ENCODE measurements at regions of chr1 and their contacts with region 1.

Region 1: DNA sequence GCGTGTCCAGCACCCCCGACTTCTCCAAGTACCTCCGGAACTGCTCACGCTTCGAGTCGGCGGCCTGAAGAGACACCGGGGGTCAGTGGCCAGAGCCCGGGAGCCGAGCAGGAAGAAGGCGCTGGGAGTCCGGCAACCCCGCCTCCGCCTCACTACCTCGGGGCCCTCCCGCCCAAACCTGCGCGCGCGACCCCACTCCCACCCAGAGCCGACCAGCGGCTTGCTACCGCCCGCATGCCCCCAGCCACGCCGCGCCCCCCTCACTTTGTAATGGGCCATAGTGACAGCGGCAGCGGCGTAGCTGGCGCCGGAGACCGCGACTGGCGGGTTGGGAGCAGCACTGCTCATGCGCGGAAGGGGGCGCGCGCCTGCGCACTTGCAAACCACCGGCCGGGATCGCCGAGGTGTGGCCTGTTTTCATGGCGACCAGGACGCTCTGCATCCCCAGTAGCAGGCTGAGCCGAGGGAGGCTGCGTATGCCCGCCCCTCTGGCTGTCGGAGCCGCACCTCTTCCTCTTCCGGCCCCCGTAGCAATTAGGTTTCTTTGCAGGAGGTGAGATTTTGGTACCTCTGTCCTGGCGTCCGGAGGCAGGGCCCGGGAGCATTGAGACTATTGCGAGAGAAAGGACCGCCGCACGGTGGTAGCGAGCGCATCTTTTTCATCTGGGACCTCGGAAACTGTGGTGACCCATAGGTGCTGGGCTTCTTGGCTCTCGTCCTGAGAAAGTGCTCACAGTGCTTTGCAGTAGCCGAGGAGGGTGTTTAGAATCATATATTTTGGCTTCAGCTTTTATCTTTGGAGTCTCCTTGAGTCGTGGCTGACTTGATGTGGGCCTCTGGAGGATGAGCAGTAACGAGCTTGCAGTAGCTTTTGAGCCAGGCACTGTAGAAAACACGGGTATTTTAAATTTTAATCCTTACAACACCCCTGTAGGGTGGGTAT is at the start of gene MYCBP:
- DNase-seq: peak; percentile 94
- ATAC-seq: peak; percentile 99
- H3K4me3 ChIP-seq: peak within 1 kb of the TSS; percentile 87
- H3K27ac ChIP-seq: peak within 1 kb of the TSS; percentile 59
- H3K4me1 ChIP-seq: no peaks in the 10 kb centered on the region; the same call in 1 of the 2 replicates
- H3K27me3 ChIP-seq: no peaks in the 10 kb centered on the region
- CTCF ChIP-seq: no peak
- POLR2A ChIP-seq: no peak
- RAD21 ChIP-seq: no peak
- total RNA-seq, gene MYCBP: 9.9 and 15.6 TPM in 2 replicates

Region 2: GRCh38 chr1:38990738-38991639 is 117.7 kb after region 1 on chr1 and contains the start of gene AKIRIN1:
- CTCF ChIA-PET with region 1: no interaction called
- POLR2A ChIA-PET with region 1: interaction called, 5 read pairs
- dilution Hi-C with region 1: no loop called
- in situ Hi-C with region 1: no loop called
- intact Hi-C with region 1: loop called (anchors 2 kb)
- DNase-seq: peak; percentile 95
- ATAC-seq: peak; percentile 94
- H3K4me3 ChIP-seq: peak within 1 kb of the TSS; percentile 85
- H3K27ac ChIP-seq: peak within 1 kb of the TSS; percentile 93
- H3K4me1 ChIP-seq: peaks cover 11% of the 10 kb centered on the region
- H3K27me3 ChIP-seq: no peaks in the 10 kb centered on the region
- CTCF ChIP-seq: no peak
- POLR2A ChIP-seq: peak; percentile 98
- RAD21 ChIP-seq: no peak
- total RNA-seq, gene AKIRIN1: 42.5 and 63.9 TPM in 2 replicates

Region 3: GRCh38 chr1:39026051-39026865 is 153.0 kb after region 1 on chr1 and contains the start of gene NDUFS5:
- CTCF ChIA-PET with region 1: no interaction called
- POLR2A ChIA-PET with region 1: no interaction called
- dilution Hi-C with region 1: no loop called
- in situ Hi-C with region 1: no loop called
- intact Hi-C with region 1: loop called (anchors 1 kb)
- DNase-seq: peak; percentile 95
- ATAC-seq: peak; percentile 93
- H3K4me3 ChIP-seq: peak within 1 kb of the TSS; percentile 75
- H3K27ac ChIP-seq: peak within 1 kb of the TSS; percentile 93
- H3K4me1 ChIP-seq: peaks cover 3% of the 10 kb centered on the region
- H3K27me3 ChIP-seq: no peaks in the 10 kb centered on the region
- CTCF ChIP-seq: no peak
- POLR2A ChIP-seq: peak; percentile 98
- RAD21 ChIP-seq: 0 out of 2 replicates have a peak, but pooled peaks have one; percentile 16
- total RNA-seq, gene NDUFS5: 645 and 1,415 TPM in 2 replicates

Region 4: GRCh38 chr1:39034114-39034654 is 160.9 kb after region 1 on chr1:
- CTCF ChIA-PET with region 1: no interaction called
- POLR2A ChIA-PET with region 1: interaction called, 10 read pairs
- dilution Hi-C with region 1: no loop called
- in situ Hi-C with region 1: no loop called
- intact Hi-C with region 1: no loop called
- DNase-seq: no peak
- ATAC-seq: no peak
- H3K4me3 ChIP-seq: no peak overlapping the region
- H3K27ac ChIP-seq: no peak overlapping the region
- H3K4me1 ChIP-seq: no peaks in the 10 kb centered on the region
- H3K27me3 ChIP-seq: no peaks in the 10 kb centered on the region
- CTCF ChIP-seq: no peak
- POLR2A ChIP-seq: no peak
- RAD21 ChIP-seq: no peak

Region 5: GRCh38 chr1:39091845-39092645 is 218.7 kb after region 1 on chr1:
- CTCF ChIA-PET with region 1: interaction called, 3 read pairs
- POLR2A ChIA-PET with region 1: no interaction called
- dilution Hi-C with region 1: no loop called
- in situ Hi-C with region 1: no loop called
- intact Hi-C with region 1: loop called (anchors 2 kb)
- DNase-seq: peak; percentile 81
- ATAC-seq: peak; percentile 92
- H3K4me3 ChIP-seq: no peak overlapping the region
- H3K27ac ChIP-seq: no peak overlapping the region
- H3K4me1 ChIP-seq: peaks cover 4% of the 10 kb centered on the region
- H3K27me3 ChIP-seq: no peaks in the 10 kb centered on the region
- CTCF ChIP-seq: peak; percentile 80
- POLR2A ChIP-seq: no peak
- RAD21 ChIP-seq: peak; percentile 76

Region 6: GRCh38 chr1:39538588-39539465 is 665.5 kb after region 1 on chr1:
- CTCF ChIA-PET with region 1: no interaction called
- POLR2A ChIA-PET with region 1: no interaction called
- dilution Hi-C with region 1: no loop called
- in situ Hi-C with region 1: loop called (anchors 25 kb)
- intact Hi-C with region 1: no loop called
- DNase-seq: peak; percentile 72
- ATAC-seq: peak; percentile 95
- H3K4me3 ChIP-seq: no peak overlapping the region
- H3K27ac ChIP-seq: no peak overlapping the region
- H3K4me1 ChIP-seq: peaks cover 3% of the 10 kb centered on the region
- H3K27me3 ChIP-seq: no peaks in the 10 kb centered on the region
- CTCF ChIP-seq: peak; percentile 90
- POLR2A ChIP-seq: no peak
- RAD21 ChIP-seq: peak; percentile 89